ENCODE measurements at regions of chr7 and their contacts with region 1.

Region 1: GRCh38 chr7:17690030-17690429 is 250.3 kb downstream of the SNX13 start:
- DNase-seq: no peak
- ATAC-seq: 0 out of 2 replicates have a peak, but pooled peaks have one; percentile 34
- H3K4me3 ChIP-seq: no peak overlapping the region
- H3K27ac ChIP-seq: no peak overlapping the region
- H3K4me1 ChIP-seq: no peaks in the 10 kb centered on the region
- H3K27me3 ChIP-seq: no peaks in the 10 kb centered on the region
- CTCF ChIP-seq: no peak

Region 2: DNA sequence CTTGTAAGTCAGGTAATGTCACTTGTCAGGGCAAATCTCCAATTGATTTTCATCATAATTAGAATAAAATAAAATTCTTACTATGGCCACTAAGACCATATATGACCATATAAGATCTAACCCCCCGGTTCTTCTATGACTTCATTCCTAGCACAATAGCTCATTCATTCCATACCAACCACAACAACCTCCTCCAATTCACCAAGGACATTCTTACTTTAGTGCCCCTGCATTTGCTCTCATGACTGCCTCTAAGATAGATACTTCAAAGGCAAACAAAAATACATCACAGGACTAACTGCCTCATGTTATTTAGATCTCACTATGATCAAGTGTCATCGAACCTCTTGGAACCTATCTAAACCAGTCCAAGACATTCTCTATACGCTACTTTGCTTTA is 159.5 kb after region 1 on chr7:
- CTCF ChIA-PET with region 1: no interaction called
- POLR2A ChIA-PET with region 1: no interaction called
- in situ Hi-C with region 1: no loop called
- intact Hi-C with region 1: no loop called
- DNase-seq: no peak
- ATAC-seq: no peak
- H3K4me3 ChIP-seq: no peak overlapping the region
- H3K27ac ChIP-seq: no peak overlapping the region
- H3K4me1 ChIP-seq: 0 out of 2 replicates have a peak, but pooled peaks cover 2% of the 10 kb centered on the region
- H3K27me3 ChIP-seq: no peaks in the 10 kb centered on the region
- CTCF ChIP-seq: no peak

Region 3: GRCh38 chr7:18004372-18004771 is 314.3 kb after region 1 on chr7:
- CTCF ChIA-PET with region 1: interaction called, 11 read pairs
- POLR2A ChIA-PET with region 1: no interaction called
- in situ Hi-C with region 1: no loop called
- intact Hi-C with region 1: no loop called
- DNase-seq: no peak
- ATAC-seq: no peak
- H3K4me3 ChIP-seq: no peak overlapping the region
- H3K27ac ChIP-seq: no peak overlapping the region
- H3K4me1 ChIP-seq: no peaks in the 10 kb centered on the region
- H3K27me3 ChIP-seq: no peaks in the 10 kb centered on the region
- CTCF ChIP-seq: no peak

Measured in Panc1 (cell line).